ENCODE measurements at regions of chr2 and their contacts with region 1.

Region 1: GRCh38 chr2:219459460-219460311 is 25.0 kb downstream of the SPEG start:
- DNase-seq: peak in 7 of 9 experiments; percentile 16 to 62 (median 45)
- ATAC-seq: peak; percentile 59
- H3K4me3 ChIP-seq: no peak overlapping the region
- H3K4me3 Mint-ChIP-seq: no peak overlapping the region
- H3K27ac ChIP-seq: no peak overlapping the region
- H3K27ac Mint-ChIP-seq: no peak overlapping the region
- H3K4me1 ChIP-seq: no peaks in the 10 kb centered on the region
- H3K4me1 Mint-ChIP-seq: peaks cover 9% of the 10 kb centered on the region
- H3K27me3 ChIP-seq: no peaks in the 10 kb centered on the region
- H3K27me3 Mint-ChIP-seq: no peaks in the 10 kb centered on the region
- CTCF ChIP-seq: peak; percentile 77

Region 2: DNA sequence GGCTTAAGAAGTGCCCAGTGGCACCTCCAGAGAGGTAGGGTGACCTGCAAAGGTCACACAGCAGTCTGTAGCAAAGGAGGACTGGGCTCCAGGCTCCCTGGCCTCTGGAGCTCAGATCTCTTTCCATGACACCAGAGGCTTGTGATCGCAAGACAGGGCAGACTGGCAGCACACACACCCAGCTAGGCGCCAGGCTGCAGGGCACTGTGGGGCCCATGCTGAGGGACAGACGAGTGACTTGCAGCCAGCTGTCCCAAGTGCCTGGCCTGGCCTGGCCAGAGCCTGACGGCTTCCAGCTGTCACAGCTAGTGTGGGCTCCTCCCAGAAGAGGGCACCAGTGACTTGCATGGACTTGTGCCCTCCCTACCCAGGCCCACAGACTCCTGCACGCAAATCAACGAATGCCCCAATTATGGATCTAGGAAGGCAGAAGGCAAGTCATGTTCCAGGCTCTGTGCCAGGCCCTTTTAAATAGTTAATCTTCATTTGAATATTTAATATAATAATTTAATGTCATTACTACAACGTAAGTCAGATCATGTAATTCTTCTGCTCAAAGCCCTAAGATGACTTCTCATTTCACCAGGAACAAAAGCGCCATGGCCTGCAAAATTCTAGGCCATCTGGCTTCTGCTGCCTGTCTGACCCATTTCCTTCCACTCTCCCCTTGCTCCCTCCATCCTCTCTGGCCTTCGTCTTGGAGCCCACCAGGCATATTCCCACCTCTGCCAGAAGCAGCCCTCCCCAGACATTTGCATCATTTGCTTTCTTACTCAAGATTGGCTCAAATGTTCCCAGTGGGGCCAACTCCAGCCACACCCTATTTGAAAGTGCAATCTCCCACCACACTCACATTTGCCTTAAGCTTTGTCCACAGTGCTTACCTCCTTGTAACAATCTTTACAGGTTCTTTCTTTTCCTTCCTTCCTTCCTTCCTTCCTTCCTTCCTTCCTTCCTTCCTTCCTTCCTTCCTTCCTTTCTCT is 28.8 kb before region 1 on chr2:
- CTCF ChIA-PET with region 1: interaction called, 5 read pairs
- POLR2A ChIA-PET with region 1: no interaction called
- intact Hi-C with region 1: loop called in 1 of 2 experiments (anchors 1 kb)
- DNase-seq: peak in 2 of 9 experiments; percentile 29 to 47
- ATAC-seq: peak; percentile 57
- H3K4me3 ChIP-seq: no peak overlapping the region
- H3K4me3 Mint-ChIP-seq: no peak overlapping the region
- H3K27ac ChIP-seq: no peak overlapping the region
- H3K27ac Mint-ChIP-seq: no peak overlapping the region
- H3K4me1 ChIP-seq: no peaks in the 10 kb centered on the region
- H3K4me1 Mint-ChIP-seq: peaks cover 6% of the 10 kb centered on the region
- H3K27me3 ChIP-seq: peaks cover 0 to 14% of the 10 kb centered on the region in 2 experiments
- H3K27me3 Mint-ChIP-seq: peaks cover 16% of the 10 kb centered on the region
- CTCF ChIP-seq: peak; percentile 24

Region 3: GRCh38 chr2:219642465-219643080 is 182.9 kb after region 1 on chr2:
- CTCF ChIA-PET with region 1: no interaction called
- POLR2A ChIA-PET with region 1: no interaction called
- intact Hi-C with region 1: loop called in 1 of 2 experiments (anchors 1 kb)
- DNase-seq: peak; percentile 76 to 95 (median 89)
- ATAC-seq: peak; percentile 100
- H3K4me3 ChIP-seq: no peak overlapping the region
- H3K4me3 Mint-ChIP-seq: no peak overlapping the region
- H3K27ac ChIP-seq: no peak overlapping the region
- H3K27ac Mint-ChIP-seq: no peak overlapping the region
- H3K4me1 ChIP-seq: no peaks in the 10 kb centered on the region
- H3K4me1 Mint-ChIP-seq: peaks cover 7% of the 10 kb centered on the region
- H3K27me3 ChIP-seq: peaks cover 0 to 1% of the 10 kb centered on the region in 2 experiments
- H3K27me3 Mint-ChIP-seq: peaks cover 33% of the 10 kb centered on the region
- CTCF ChIP-seq: peak; percentile 99

Region 4: DNA sequence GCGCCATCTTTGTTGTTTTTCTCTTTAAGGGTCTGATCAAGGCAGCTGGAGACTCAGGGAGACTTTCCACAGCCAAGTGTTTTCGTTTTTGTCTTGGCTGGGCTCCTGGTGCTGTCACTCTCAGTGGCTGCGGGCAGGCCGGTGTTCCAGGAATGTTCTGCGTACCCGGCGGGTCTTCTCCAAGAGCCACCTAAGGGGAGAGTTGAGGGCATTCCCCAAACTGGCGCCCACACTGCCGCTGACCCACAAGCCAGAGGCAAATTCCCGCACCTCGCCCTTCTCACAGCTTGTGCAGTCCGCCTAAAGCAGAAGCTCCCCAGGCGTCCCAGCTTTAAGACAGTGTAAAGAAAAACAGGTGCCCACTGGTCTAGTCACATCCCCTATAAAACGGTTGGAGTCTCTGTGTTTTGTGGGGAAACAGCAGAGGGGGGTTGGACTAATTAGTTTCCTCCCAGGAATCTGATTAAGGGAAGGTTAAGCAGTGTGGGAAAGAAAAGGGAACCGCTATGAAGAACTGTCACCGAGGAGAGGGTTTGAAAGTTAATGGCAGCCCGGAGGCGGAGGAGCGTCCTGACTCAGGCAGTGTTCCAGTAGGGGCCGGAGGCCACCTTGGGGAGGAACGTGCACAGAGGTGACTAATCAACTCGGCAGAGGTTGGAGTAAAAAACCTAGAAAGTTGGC is 392.3 kb after region 1 on chr2:
- CTCF ChIA-PET with region 1: no interaction called
- POLR2A ChIA-PET with region 1: no interaction called
- intact Hi-C with region 1: no loop called
- DNase-seq: no peak
- ATAC-seq: no peak
- H3K4me3 ChIP-seq: no peak overlapping the region
- H3K4me3 Mint-ChIP-seq: no peak overlapping the region
- H3K27ac ChIP-seq: no peak overlapping the region
- H3K27ac Mint-ChIP-seq: no peak overlapping the region
- H3K4me1 ChIP-seq: no peaks in the 10 kb centered on the region
- H3K4me1 Mint-ChIP-seq: no peaks in the 10 kb centered on the region
- H3K27me3 ChIP-seq: no peaks in the 10 kb centered on the region
- H3K27me3 Mint-ChIP-seq: peaks cover 21% of the 10 kb centered on the region
- CTCF ChIP-seq: no peak